Activated CD4-positive, alpha-beta memory T cell treated with anti-CD3 and anti-CD28 coated beads, Interleukin-2, amount 10 ng/mL, durations not matched to agents 7 days and 5 days (primary cell): ENCODE measurements at regions of chr10 and their contacts with region 1.

Region 1: DNA sequence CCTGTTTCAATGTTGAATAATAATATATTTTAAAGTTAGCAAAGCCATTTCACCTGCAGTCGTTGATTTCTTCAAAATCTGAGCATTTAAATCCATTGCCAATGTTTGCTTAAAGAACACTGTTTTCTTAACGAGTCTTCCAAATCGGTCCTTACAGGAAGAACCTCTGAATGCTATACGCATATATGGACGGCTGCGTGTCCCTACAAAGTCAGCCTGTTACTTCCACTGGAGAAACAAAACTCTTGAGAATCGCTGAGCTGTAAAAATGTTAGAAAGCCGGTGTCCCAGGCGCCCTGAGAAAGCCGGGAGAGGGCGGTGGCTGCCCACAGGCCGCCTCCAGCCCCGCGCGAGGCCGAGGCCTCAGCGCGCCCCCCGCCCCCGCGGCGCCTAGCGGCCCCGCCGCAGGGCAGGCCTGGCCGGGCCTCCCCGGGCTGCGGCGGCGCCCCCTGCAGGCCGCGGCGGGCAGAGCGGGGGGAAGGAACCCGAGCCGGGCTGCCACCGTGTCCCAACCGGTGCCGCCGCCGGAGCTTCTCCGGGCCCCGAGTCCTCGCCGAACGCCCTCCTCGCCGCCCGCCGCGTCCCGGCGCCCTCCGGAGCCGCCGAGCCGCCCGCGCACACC is at the start of gene FHIP2A:
- DNase-seq: peak; percentile 85
- H3K4me3 Mint-ChIP-seq: peak within 1 kb of the TSS; percentile 86
- H3K27ac Mint-ChIP-seq: peak within 1 kb of the TSS; percentile 95
- H3K4me1 Mint-ChIP-seq: peaks cover 42% of the 10 kb centered on the region
- H3K27me3 Mint-ChIP-seq: peaks cover 10% of the 10 kb centered on the region
- total RNA-seq, gene FHIP2A: 34.3 to 39.2 TPM

Region 2: DNA sequence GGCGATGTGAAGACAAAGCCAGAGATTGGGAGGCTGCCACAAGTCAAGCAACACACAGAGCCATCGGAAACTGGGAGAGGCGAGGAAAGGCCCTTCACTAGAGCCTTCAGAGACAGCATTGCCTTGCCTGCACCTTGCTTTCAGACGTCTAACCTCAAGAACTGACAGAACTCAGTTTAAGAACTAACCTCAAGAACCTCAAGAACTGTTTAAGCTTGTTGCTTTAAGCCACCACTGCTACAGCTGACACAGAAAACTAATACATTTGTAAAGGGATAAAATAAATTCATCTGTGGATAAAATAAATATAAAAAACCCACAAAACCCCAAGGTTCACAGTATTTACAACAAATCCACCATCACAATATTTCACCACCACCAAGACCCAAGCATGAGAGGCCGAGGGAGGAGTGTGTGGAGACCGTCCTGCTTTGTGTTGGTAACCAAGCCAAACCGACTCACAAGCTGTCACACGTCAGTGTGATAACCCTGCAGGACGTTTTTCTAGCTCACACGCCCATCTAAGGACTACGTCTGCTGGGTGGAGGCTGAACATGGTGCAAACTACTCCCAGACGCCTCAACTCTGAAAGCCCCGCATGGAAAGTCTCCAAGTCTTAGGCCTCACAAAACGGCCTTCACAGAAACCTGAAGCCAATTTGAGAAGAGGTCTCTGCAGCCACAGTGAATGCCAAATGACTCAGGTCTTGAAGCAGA is 280.2 kb before region 1 on chr10:
- CTCF ChIA-PET with region 1: interaction called, 9 read pairs
- POLR2A ChIA-PET with region 1: interaction called, 18 read pairs
- DNase-seq: peak; percentile 83
- H3K4me3 Mint-ChIP-seq: peak overlapping the region; percentile 52
- H3K27ac Mint-ChIP-seq: peak overlapping the region; percentile 98
- H3K4me1 Mint-ChIP-seq: peaks cover 91% of the 10 kb centered on the region
- H3K27me3 Mint-ChIP-seq: no peaks in the 10 kb centered on the region

Region 3: GRCh38 chr10:114779803-114780609 is 41.4 kb before region 1 on chr10:
- CTCF ChIA-PET with region 1: interaction called, 13 read pairs
- POLR2A ChIA-PET with region 1: no interaction called
- DNase-seq: no peak
- H3K4me3 Mint-ChIP-seq: no peak overlapping the region
- H3K27ac Mint-ChIP-seq: peak overlapping the region; percentile 14
- H3K4me1 Mint-ChIP-seq: peaks cover 17% of the 10 kb centered on the region
- H3K27me3 Mint-ChIP-seq: peaks cover 16% of the 10 kb centered on the region

Region 4: DNA sequence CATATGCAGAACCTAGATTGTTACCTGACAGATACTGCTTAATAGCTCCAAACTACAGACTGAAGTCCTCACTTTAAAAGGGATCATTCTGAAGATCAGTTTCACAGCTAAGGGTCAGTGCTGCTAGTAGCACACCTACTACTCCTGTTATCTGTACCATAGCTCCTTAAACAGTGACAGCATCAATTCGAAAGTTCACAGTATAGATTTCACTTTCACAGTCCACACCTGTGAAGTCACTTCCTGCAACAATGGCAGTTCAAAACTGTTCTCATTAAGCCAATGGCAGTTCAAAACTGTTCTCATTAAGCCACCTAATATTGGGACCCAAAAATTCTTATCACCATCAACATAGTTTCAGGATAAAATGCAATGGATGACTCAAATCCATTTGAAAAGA is 10.5 kb before region 1 on chr10:
- CTCF ChIA-PET with region 1: interaction called, 39 read pairs
- POLR2A ChIA-PET with region 1: interaction called, 37 read pairs
- DNase-seq: no peak
- H3K4me3 Mint-ChIP-seq: no peak overlapping the region
- H3K27ac Mint-ChIP-seq: peak overlapping the region; percentile 83
- H3K4me1 Mint-ChIP-seq: peaks cover 34% of the 10 kb centered on the region
- H3K27me3 Mint-ChIP-seq: no peaks in the 10 kb centered on the region

Region 5: DNA sequence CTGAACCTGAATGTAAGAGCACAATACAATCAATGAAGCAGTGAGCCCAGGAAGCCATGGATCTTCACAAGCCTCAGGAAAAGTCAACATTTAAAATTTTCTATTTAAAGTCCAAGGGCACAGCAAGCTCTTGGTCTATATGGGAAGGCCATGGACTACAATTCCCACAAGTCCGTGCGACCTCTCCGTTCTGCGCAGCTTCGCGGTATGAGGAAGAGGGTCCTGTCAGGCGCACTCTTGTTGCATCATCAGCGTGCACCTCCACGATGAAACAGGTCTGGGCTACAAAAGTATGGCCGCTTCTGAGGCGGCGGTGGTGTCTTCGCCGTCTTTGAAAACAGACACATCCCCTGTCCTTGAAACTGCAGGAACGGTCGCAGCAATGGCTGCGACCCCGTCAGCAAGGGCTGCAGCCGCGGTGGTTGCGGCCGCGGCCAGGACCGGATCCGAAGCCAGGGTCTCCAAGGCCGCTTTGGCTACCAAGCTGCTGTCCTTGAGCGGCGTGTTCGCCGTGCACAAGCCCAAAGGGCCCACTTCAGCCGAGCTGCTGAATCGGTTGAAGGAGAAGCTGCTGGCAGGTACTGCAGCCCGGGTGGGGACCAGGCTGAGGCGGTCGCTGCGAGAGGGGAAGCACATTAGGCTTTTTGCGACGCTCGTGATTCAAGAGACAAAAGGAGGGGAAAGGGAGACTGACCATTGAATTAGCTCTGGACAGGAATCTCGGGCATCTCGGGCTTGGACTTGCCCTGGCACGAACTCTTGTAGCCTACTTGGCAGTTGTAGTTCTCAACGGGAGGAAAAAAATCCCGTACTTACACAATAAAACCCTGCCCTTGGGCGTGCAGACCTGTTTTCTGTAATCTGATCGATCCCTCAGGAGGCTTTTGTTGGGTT is 116.8 kb after region 1 on chr10 and contains the start of gene TRUB1:
- CTCF ChIA-PET with region 1: no interaction called
- POLR2A ChIA-PET with region 1: interaction called, 10 read pairs
- DNase-seq: peak; percentile 93
- H3K4me3 Mint-ChIP-seq: peak within 1 kb of the TSS; percentile 94
- H3K27ac Mint-ChIP-seq: peak within 1 kb of the TSS; percentile 83
- H3K4me1 Mint-ChIP-seq: peaks cover 32% of the 10 kb centered on the region
- H3K27me3 Mint-ChIP-seq: no peaks in the 10 kb centered on the region
- total RNA-seq, gene TRUB1: 14.9 to 16.7 TPM